Posterior vena cava (tissue), 2 donors: ENCODE measurements at regions of chr7 and their contacts with region 1.

Region 1: DNA sequence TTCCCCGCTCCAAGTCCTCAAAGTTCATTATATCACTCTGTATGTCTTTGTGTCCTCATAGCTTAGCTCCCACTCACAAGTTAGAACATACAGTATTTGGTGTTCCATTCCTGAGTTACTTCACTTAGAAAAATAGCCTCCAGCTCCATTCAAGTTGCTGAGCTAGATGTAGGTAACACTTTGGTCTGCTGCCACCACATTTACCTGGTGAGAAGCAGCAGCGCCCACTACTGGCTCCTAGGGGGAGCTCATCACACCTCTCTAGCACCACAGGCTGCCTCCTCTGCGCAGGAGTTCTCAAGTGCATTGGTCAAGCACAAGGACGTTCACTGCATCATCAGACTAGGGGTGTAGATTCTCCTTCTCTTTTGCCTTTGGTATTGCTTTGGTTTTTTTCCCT is 530.9 kb upstream of the AUTS2 start:
- DNase-seq: no peak

Region 2: DNA sequence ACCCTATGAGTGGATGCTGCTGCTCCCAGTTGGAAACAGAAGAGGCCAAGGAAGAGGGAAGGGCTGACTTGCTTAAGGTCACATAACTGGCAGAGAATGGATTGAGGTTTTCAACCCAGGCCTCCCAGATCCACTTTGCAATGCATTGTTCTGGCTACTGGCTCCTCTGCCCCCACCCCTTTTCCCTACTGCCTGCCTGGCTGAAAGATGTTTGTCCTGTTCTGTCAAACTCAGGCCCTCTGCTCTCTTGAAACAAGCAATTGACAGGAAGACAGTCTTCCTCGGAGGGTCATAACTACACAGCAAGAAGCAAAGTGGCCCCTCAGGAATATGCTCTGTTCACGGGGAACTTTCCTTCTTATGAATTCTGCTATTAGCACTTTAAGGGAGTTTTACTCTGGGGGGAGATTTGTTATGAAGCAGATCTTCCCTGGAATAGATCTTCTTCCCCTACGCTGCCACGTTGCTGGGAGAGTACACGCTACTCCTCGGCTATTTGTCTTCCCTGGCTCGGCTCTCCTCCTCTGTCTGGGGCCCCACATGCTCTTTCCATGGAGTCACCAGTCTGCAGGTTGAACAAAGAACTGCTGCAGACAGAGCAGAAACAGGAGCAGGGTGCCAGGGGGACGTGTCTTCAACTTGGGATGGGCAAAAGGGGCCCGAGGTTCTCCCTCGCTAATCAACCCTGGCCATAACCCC is 1634.7 kb before region 1 on chr7:
- intact Hi-C with region 1: loop called in 1 of 2 experiments (anchors 5 kb)
- DNase-seq: no peak

Region 3: GRCh38 chr7:69047151-69047754 is 20.1 kb before region 1 on chr7:
- intact Hi-C with region 1: no loop called
- DNase-seq: no peak